Uterus (tissue), 4 donors: ENCODE measurements at regions of chr1 and their contacts with region 1.

Region 1: DNA sequence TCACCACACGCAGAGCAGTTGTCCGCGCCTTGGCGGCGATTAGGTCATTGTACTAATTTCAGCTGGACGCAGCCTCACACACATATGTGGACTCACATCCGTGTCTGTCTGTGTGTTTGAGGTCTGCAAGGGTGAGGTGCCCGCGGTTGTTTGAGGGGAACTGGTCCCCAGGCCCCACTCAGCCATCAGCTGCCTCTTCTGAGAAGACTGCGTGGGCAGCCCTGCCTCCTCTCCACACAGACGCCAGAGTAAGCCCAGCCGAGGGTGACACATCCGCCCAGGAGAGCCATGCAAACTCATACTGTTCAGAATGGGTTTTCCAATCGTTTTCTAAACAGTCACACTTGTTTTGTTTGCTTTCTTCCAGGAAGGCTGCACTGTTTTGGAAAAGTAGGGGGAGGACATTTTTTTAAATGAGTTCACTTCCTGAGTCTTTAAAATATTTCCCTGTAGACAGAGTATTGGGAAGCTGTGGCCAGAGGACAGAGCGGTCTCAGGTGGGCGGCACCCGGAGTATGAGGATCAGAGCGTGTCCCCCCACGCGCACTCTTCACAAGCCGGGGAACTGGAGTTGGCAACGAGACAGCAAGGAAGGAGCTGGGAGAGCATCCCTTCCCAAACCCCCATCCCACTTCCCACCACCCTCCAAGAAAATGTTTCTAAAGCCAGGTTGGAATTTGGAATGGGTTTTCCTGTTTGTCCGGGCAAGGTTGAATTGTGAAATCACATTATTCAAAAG is 53.3 kb downstream of the TOMM20 start:
- DNase-seq: peak; percentile 76 to 82
- H3K4me3 ChIP-seq: peak overlapping the region in 1 of 2 donors; percentile 3
- H3K27ac ChIP-seq: peak overlapping the region; percentile 84 to 89
- H3K4me1 ChIP-seq: peaks cover 10 to 16% of the 10 kb centered on the region in 2 donors
- H3K27me3 ChIP-seq: no peaks in the 10 kb centered on the region
- CTCF ChIP-seq: no peak
- POLR2A ChIP-seq: peak in 1 of 2 donors; percentile 18

Region 2: DNA sequence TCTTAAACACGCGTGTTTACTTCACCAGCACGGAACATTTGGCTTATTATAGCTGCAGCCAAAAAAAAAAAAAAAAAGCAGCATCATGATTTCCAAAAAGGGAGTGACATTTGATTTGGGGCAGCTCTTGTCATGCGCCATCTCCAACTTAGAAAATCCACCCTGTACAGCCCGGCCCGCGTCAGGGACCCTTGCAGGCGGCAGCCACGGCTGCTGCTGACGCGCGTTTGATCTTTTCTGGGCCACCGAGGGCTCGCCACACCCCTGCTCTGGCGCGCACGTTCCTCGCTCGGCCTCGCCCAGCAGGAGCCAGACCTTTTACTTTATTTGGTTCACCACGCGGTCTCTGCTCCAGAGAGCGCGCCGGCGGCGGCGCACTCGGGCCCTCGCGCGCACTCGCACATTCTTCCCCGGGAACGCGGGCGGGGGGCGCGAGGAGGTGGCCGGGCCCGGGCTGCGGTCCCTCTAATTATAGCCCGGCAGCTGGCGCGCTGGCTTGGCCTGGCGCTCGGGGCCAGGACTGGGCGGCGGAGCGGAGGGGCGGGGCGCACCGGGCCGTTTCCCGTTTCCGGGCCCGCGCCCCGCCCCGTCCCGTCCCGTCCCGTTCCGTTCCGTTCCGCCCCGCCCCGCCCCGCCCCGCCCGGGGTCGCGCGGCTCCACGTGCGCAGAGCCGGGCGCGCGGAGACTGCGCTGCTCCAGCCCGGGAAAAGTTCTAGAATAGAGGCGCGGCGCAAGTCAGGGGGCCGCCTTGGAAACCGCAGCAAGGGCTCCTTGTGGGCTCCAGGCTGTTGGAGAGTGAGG is 475.5 kb before region 1 on chr1:
- intact Hi-C with region 1: loop called (anchors 10 kb)
- DNase-seq: peak; percentile 79 to 87
- H3K4me3 ChIP-seq: peak overlapping the region; percentile 23 to 63
- H3K27ac ChIP-seq: peak overlapping the region; percentile 99 to 100
- H3K4me1 ChIP-seq: peaks cover 19 to 22% of the 10 kb centered on the region in 2 donors
- H3K27me3 ChIP-seq: no peaks in the 10 kb centered on the region
- CTCF ChIP-seq: peak in 3 of 4 experiments; percentile 5 to 31 (median 20)
- POLR2A ChIP-seq: peak; percentile 43 to 92

Region 3: GRCh38 chr1:234722904-234723720 is 352.2 kb before region 1 on chr1:
- intact Hi-C with region 1: loop called (anchors 10 kb)
- DNase-seq: peak; percentile 78 to 89
- H3K4me3 ChIP-seq: no peak overlapping the region
- H3K27ac ChIP-seq: peak overlapping the region; percentile 96 to 98
- H3K4me1 ChIP-seq: peaks cover 25 to 59% of the 10 kb centered on the region in 2 donors
- H3K27me3 ChIP-seq: no peaks in the 10 kb centered on the region
- CTCF ChIP-seq: peak in 1 of 4 experiments; percentile 5
- POLR2A ChIP-seq: no peak

Region 4: DNA sequence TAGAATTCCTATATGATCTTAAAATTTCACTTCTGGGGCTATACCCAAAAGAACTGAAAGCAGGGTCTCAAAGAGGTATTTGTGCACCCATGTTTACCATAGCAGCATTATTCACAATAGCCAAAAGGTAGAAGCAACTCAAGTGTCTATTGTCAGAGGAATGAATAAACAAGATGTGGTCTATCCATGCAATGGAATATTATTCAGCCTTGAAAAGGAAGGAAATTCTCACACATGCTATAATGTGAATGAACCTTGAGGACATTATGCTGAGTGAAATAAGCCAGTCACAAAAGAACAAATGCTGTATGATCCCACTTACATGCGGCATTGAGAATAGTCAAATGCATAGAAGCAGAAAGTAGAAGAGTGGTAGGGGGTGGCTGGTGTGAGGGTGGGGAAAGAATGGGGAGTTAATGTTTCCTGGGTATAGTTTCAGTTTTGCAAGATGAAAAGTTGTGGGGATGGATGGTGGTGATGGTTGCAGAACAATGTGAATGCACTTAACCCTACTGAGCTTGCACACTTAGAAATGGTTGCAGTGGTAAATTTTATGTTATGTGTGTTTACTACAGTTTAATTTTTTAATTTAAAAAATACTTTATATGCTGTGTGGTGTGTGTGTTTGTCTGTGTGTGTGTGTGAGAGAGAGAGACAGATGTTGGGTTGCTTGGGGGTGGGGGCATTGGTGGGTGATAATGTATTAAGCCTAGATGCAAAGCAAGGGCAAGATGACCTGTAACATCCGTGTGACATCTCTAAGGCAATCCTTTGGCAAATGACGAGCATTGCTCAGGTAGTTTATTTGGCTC is 69.0 kb before region 1 on chr1:
- intact Hi-C with region 1: loop called (anchors 10 kb)
- DNase-seq: no peak
- H3K4me3 ChIP-seq: no peak overlapping the region
- H3K27ac ChIP-seq: no peak overlapping the region
- H3K4me1 ChIP-seq: no peaks in the 10 kb centered on the region
- H3K27me3 ChIP-seq: no peaks in the 10 kb centered on the region
- CTCF ChIP-seq: no peak
- POLR2A ChIP-seq: no peak